ENCODE measurements at regions of chr2 and their contacts with region 1.

Region 1: GRCh38 chr2:168443818-168444217 is 12.3 kb upstream of the CERS6 start:
- DNase-seq: no peak
- ATAC-seq: peak in 4 of 8 donors; percentile 47 to 62 (median 52)
- H3K4me3 ChIP-seq: no peak overlapping the region
- H3K27ac ChIP-seq: no peak overlapping the region
- H3K4me1 ChIP-seq: peaks cover 0 to 9% (median 0%) of the 10 kb centered on the region in 9 donors
- H3K27me3 ChIP-seq: no peaks in the 10 kb centered on the region
- CTCF ChIP-seq: peak in 7 of 9 donors; percentile 7 to 40 (median 30)

Region 2: DNA sequence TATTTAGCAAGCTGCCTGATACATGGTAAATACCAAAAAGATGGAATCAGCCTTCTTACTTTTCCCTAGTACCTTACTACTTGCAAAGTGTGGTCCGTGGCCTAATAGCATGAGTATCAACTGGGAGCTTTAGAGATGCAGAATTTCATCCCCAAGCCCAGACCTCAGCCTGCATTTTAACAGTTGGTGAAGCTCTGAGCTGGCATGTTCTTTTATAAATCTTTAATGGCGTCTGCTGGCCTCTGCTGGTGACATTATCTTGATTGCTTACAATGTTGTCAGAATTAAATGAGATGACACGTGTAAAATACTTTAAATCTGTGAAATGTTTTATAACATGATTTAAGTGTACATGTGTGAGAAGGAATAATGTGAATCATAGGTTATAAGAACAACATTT is 243.5 kb after region 1 on chr2:
- intact Hi-C with region 1: loop called in 4 of 10 experiments (anchors 5 to 10 kb)
- DNase-seq: no peak
- ATAC-seq: peak in 5 of 8 donors; percentile 54 to 70 (median 57)
- H3K4me3 ChIP-seq: no peak overlapping the region
- H3K27ac ChIP-seq: no peak overlapping the region
- H3K4me1 ChIP-seq: peaks cover 0 to 32% (median 3%) of the 10 kb centered on the region in 9 donors
- H3K27me3 ChIP-seq: no peaks in the 10 kb centered on the region
- CTCF ChIP-seq: peak in 7 of 9 donors; percentile 14 to 54 (median 33)

Region 3: GRCh38 chr2:168699844-168700417 is 256.1 kb after region 1 on chr2:
- intact Hi-C with region 1: loop called in 2 of 10 experiments (anchors 10 kb)
- DNase-seq: peak; percentile 79 to 85
- ATAC-seq: peak in 7 of 8 donors; percentile 62 to 80 (median 77)
- H3K4me3 ChIP-seq: no peak overlapping the region
- H3K27ac ChIP-seq: peak overlapping the region in 2 of 10 donors; percentile 3
- H3K4me1 ChIP-seq: peaks cover 6 to 33% (median 13%) of the 10 kb centered on the region in 9 donors
- H3K27me3 ChIP-seq: no peaks in the 10 kb centered on the region
- CTCF ChIP-seq: no peak